Left ventricle myocardium superior (tissue), 1 donor: ENCODE measurements at regions of chr1 and their contacts with region 1.

Region 1: DNA sequence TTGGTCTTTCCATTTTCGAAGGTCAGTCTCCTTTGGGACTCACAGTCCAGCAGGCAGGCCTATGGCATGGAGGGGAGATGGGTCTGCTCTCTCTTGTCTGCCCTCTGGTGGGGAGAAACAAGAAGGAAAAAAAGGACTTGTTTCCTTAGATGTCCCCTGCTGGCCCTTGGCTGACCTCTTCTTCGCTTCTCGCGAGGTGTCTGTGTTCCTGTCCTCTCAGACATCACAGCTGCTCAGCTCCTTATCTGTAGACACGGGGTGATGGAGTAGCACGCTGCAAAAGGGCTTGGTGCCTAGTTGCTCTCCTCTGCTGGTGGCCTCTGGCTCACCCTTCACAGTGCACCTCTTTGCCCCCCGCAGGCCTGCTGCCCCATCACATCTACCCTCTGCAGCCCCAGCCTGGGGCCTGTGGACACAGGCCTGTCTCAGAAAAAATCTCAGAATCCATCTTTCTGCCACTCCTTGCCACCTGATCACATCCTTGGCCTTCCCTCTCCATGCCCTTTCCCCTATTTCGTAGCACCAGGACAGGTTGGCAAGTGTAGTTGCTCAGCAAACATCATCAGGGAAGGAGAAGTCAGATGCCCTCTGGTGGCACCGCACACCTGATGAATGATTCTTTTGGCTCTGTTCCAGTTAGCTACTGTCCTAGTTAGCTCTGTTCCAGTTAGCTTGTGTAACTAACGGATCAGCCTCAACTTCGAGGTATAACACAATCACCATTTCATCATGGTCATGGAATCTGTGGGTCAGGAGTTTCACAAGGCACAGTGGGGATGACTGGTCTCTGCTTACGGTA is 18.7 kb upstream of the AK2 start:
- DNase-seq: peak; percentile 86
- ATAC-seq: peak; percentile 98

Region 2: DNA sequence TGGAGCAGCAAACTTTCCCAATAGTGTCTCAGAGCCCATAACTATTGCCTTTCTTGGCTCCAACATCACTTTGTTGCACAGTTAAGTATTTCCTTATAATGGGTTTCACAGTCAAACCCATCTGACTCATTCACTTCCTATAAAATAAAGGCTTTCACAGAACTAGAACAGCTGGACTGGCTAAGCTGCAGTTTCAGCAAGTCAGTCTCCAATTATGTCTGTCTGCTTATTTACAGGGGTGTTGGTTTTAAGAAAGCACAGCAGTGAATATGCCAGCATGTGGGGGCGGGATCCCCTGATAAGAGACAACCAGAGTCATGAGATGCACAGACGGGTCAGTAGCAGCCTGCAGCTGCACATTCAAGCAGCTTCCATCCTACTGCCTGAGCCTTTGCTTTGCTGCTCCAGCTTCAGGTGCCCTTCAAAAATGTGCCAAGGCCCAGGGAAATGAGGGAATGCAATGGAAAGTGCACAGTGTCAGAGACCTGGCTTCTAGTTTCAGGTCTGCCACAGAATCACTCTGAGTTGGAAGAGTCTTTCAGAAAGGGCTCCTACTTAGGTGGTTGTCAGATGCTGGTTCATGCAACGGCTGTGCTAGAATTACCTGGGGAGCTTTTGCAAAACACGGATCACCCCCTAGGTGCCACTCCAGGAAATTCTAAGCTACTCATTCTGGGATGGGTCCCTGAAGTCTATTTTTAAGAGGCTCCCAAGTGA is 115.6 kb before region 1 on chr1:
- intact Hi-C with region 1: loop called (anchors 10 kb)
- DNase-seq: peak; percentile 61
- ATAC-seq: peak; percentile 88

Region 3: GRCh38 chr1:33460947-33461629 is 405.7 kb after region 1 on chr1:
- intact Hi-C with region 1: no loop called
- DNase-seq: peak; percentile 73
- ATAC-seq: peak; percentile 79